ENCODE measurements at regions of chr1 and their contacts with region 1.

Region 1: GRCh38 chr1:190812996-190813395 is 335.3 kb upstream of the BRINP3 start:
- DNase-seq: no peak
- ATAC-seq: no peak
- H3K4me3 ChIP-seq: no peak overlapping the region
- H3K27ac ChIP-seq: no peak overlapping the region
- H3K4me1 ChIP-seq: no peaks in the 10 kb centered on the region
- H3K27me3 ChIP-seq: no peaks in the 10 kb centered on the region
- CTCF ChIP-seq: no peak
- EP300 ChIP-seq: no peak
- POLR2A ChIP-seq: no peak
- RAD21 ChIP-seq: no peak

Region 2: DNA sequence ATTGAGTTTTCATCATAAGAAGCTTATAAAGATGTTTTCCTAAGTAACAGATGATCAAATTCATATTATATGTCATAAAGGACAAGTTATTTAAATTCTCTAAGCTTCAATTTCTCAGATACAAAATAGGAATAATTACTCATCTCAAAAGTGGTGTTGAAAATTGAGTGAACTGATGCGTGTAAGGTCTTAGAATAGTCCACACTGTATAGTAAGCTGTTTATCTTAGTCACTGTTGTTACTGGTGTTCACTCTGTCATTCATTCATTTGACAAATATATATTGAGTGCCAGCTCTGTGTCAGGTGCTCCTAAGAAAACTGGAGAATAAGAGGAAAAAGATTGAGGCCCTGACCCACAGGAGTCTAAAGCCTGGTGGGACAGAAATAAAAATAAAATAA is 149.0 kb before region 1 on chr1:
- CTCF ChIA-PET with region 1: no interaction called
- POLR2A ChIA-PET with region 1: no interaction called
- RAD21 ChIA-PET with region 1: no interaction called
- SMC1A ChIA-PET with region 1: no interaction called
- in situ Hi-C with region 1: no loop called
- intact Hi-C with region 1: no loop called
- DNase-seq: no peak
- ATAC-seq: peak; percentile 56; the same call in 2 of the 3 replicates
- H3K4me3 ChIP-seq: no peak overlapping the region
- H3K27ac ChIP-seq: no peak overlapping the region
- H3K4me1 ChIP-seq: no peaks in the 10 kb centered on the region
- H3K27me3 ChIP-seq: no peaks in the 10 kb centered on the region
- CTCF ChIP-seq: no peak
- EP300 ChIP-seq: no peak
- POLR2A ChIP-seq: no peak
- RAD21 ChIP-seq: no peak

Region 3: DNA sequence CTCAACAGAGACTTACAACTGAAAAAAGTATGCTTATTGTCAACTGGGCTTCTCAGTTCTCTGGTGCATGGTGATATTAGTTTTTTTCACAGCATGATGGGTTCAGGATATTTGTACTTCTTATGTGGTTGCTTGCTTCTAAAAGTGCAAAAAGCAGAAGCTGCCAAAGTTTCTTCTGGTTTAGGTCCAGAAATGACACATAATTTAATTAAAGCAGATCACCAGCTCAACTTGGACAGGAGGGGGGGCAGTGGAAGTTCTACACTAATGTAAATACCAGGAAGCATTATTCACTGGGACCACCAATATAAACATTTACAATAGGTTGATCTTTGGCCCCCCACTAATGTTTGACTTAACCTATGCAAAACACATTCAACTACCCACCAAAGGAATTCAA is 19.5 kb after region 1 on chr1:
- CTCF ChIA-PET with region 1: no interaction called
- POLR2A ChIA-PET with region 1: no interaction called
- RAD21 ChIA-PET with region 1: no interaction called
- SMC1A ChIA-PET with region 1: no interaction called
- in situ Hi-C with region 1: no loop called
- intact Hi-C with region 1: no loop called
- DNase-seq: no peak
- ATAC-seq: no peak
- H3K4me3 ChIP-seq: no peak overlapping the region
- H3K27ac ChIP-seq: no peak overlapping the region
- H3K4me1 ChIP-seq: no peaks in the 10 kb centered on the region
- H3K27me3 ChIP-seq: no peaks in the 10 kb centered on the region
- CTCF ChIP-seq: no peak
- EP300 ChIP-seq: no peak
- POLR2A ChIP-seq: no peak
- RAD21 ChIP-seq: no peak

Region 4: DNA sequence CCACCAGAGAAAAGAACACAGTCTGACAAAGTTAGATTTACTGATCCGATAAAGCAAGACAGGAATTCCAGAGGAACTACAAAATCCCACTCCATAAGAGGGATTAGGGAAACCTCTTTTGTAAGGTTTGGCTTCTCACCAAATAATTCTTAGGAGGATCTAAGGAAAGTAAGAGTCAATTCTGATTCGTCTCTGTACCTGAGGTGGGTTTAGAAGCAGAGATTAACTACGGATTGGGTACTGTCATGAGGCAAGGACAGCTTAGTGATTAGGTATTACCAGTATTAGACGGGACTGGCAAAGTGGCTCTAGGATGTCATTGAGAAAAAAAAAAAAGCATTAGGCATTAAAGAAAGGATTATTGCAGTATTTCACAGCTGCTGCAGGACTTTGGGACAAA is 36.4 kb after region 1 on chr1:
- CTCF ChIA-PET with region 1: no interaction called
- POLR2A ChIA-PET with region 1: no interaction called
- RAD21 ChIA-PET with region 1: no interaction called
- SMC1A ChIA-PET with region 1: no interaction called
- in situ Hi-C with region 1: no loop called
- intact Hi-C with region 1: no loop called
- DNase-seq: no peak
- ATAC-seq: no peak
- H3K4me3 ChIP-seq: no peak overlapping the region
- H3K27ac ChIP-seq: no peak overlapping the region
- H3K4me1 ChIP-seq: no peaks in the 10 kb centered on the region
- H3K27me3 ChIP-seq: no peaks in the 10 kb centered on the region
- CTCF ChIP-seq: no peak
- EP300 ChIP-seq: no peak
- POLR2A ChIP-seq: no peak
- RAD21 ChIP-seq: no peak

Region 5: DNA sequence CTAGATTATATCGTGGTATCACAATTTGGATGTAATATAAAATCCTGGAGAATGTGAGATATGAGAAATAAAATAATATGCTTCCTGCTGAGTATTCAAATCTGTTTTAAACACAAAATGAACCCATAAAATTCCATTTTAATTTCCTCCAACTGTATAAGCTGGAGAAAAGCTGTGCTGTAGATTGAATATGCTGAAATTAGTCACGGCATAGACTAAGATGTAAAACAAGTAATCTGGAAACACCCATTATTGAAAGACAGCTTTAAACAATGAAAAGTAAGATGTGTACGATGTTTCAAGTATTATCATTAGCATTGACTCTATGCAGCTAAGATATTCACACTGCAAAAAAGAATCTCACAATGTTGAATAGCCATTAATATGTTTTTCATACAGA is 68.1 kb after region 1 on chr1:
- CTCF ChIA-PET with region 1: no interaction called
- POLR2A ChIA-PET with region 1: no interaction called
- RAD21 ChIA-PET with region 1: no interaction called
- SMC1A ChIA-PET with region 1: no interaction called
- in situ Hi-C with region 1: no loop called
- intact Hi-C with region 1: loop called (anchors 10 kb)
- DNase-seq: no peak
- ATAC-seq: no peak
- H3K4me3 ChIP-seq: no peak overlapping the region
- H3K27ac ChIP-seq: no peak overlapping the region
- H3K4me1 ChIP-seq: no peaks in the 10 kb centered on the region
- H3K27me3 ChIP-seq: no peaks in the 10 kb centered on the region
- CTCF ChIP-seq: no peak
- EP300 ChIP-seq: no peak
- POLR2A ChIP-seq: no peak
- RAD21 ChIP-seq: no peak

Measured in GM12878 (cell line).